ENCODE measurements at regions of chr2 and their contacts with region 1.

Region 1: GRCh38 chr2:136135921-136136906 is 18.3 kb upstream of the CXCR4 start:
- DNase-seq: peak; percentile 75
- H3K4me3 Mint-ChIP-seq: peak overlapping the region; percentile 11
- H3K27ac Mint-ChIP-seq: peak overlapping the region; percentile 70
- H3K4me1 Mint-ChIP-seq: peaks cover 89% of the 10 kb centered on the region
- H3K27me3 Mint-ChIP-seq: peaks cover 14% of the 10 kb centered on the region

Region 2: DNA sequence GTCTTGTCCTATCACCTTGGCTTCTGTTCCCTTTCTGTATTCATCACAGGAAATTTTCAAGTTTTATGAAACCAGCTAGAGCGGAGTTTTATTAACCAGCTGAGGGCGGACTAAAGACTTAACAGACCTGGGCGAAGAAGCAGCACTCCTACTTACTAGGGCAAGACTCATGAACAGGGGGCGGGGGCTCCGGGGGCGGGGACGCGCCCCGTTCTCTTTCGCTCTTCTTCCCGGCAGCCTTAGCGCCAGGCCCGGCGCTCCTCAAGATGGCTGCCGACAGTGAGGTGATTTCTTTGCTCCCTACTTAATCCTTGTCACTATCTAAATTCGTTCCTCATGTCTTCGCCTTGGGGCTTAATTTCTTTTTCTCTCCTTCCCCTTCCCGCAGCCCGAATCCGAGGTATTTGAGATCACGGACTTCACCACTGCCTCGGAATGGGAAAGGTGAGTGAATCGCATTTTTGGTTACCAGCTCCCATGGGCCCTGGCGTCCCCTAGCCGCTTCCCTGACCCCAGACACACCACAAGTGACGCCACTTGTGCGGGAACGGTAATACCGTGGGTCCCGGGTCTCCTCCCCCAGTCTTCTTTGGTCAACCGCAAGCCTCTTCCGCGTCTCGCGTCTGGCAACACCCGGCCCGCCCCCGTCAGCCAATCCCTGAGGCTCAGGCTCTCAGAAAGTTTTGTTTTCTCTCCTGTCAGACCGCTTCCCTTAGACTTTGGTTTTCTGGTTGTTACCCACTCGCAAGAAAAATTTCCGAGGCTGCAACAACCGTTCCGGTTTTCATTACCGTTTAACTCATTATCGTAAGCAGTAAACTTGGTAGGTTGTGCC is 1084.0 kb before region 1 on chr2 and contains the start of gene RAB3GAP1:
- CTCF ChIA-PET with region 1: no interaction called
- POLR2A ChIA-PET with region 1: no interaction called
- intact Hi-C with region 1: loop called (anchors 5 kb)
- DNase-seq: peak; percentile 97
- H3K4me3 Mint-ChIP-seq: peak within 1 kb of the TSS; percentile 98
- H3K27ac Mint-ChIP-seq: peak within 1 kb of the TSS; percentile 100
- H3K4me1 Mint-ChIP-seq: peaks cover 39% of the 10 kb centered on the region
- H3K27me3 Mint-ChIP-seq: no peaks in the 10 kb centered on the region
- total RNA-seq, gene RAB3GAP1: 29.6 to 30.7 TPM

Region 3: DNA sequence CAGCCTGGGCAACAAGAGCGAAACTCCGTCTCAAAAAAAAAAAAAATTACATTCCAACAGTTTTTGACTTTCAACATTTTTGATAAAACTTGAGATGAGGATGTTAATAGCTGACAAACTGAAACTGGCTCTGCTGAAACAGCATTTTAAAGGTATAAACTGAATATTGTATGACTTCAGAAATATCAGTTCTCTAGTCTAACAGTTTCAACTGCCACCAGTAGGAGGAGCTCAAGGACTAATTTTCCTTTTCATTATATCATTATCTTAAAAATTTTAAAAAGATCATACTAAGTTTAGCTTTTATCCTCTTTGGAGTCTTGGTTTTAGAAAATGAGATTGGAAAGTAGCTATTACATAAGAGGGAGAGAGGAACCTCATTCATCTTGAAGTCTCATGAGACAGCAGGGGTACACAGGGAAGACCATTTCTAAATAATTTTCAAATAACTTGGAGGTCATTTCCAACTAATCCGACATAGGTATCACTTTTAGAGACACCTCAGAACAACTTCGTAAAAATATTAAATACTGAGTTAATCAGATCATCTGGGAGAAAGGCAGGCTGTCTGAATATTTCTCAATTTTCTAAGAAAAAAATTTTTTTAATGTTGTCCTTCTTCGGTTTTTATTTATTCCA is 222.4 kb before region 1 on chr2:
- CTCF ChIA-PET with region 1: interaction called, 9 read pairs
- POLR2A ChIA-PET with region 1: no interaction called
- intact Hi-C with region 1: loop called (anchors 5 kb)
- DNase-seq: no peak
- H3K4me3 Mint-ChIP-seq: no peak overlapping the region
- H3K27ac Mint-ChIP-seq: no peak overlapping the region
- H3K4me1 Mint-ChIP-seq: peaks cover 14% of the 10 kb centered on the region
- H3K27me3 Mint-ChIP-seq: no peaks in the 10 kb centered on the region

Region 4: DNA sequence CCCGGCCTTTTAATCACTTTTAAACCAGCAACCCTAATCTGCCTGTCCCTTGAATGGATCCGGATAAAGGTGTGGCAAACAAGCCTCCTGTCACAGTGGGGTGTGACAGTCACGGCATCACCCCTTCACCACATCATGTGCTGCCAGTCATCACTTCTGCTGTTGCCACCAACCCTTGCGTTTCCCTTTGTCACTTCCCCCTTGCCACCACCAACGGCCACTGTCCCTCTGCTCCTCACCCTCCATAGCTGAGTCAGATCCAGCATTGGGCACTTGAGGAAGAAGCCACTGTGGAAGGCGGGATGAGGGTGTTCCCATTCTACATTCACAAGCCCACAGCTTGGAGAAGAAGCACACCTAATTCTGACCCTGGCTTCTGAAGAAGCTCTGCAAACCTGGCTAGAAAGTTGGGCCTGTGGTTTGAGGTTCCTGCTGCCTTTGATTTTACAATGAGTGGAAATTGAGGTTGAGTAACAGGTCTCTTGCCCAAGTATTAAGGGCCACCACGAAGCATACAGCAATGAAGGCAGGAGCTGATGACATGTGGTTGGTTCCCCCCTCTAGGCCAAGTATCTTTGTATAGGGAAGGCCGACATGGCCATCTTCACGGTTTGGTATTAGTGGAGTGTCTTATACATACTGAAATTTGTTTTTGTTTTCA is 127.9 kb before region 1 on chr2:
- CTCF ChIA-PET with region 1: no interaction called
- POLR2A ChIA-PET with region 1: interaction called, 3 read pairs
- intact Hi-C with region 1: loop called (anchors 1 kb)
- DNase-seq: peak; percentile 87
- H3K4me3 Mint-ChIP-seq: no peak overlapping the region
- H3K27ac Mint-ChIP-seq: peak overlapping the region; percentile 72
- H3K4me1 Mint-ChIP-seq: peaks cover 49% of the 10 kb centered on the region
- H3K27me3 Mint-ChIP-seq: no peaks in the 10 kb centered on the region

Region 5: DNA sequence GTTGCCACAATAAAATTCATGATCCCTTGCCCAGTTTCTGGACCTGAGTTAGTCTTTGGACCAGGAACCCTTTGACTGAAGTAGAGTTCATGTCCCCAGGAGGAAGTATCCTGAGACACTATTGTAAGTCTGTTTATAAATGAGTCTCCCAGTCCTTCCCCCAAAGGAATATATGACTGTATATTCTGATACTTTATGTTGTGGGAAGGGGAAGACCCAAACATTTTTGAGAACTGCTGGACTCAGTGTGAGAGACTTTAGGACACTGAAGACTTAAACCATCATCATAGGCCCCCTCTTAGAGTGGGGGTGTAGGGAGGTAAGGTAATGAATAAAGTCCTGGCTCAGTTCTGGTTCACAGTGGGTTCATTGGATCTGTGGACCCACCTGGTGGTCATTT is 10.3 kb after region 1 on chr2:
- CTCF ChIA-PET with region 1: interaction called, 4 read pairs
- POLR2A ChIA-PET with region 1: interaction called, 3 read pairs
- intact Hi-C with region 1: loop called (anchors 1 kb)
- DNase-seq: no peak
- H3K4me3 Mint-ChIP-seq: no peak overlapping the region
- H3K27ac Mint-ChIP-seq: no peak overlapping the region
- H3K4me1 Mint-ChIP-seq: peaks cover 23% of the 10 kb centered on the region
- H3K27me3 Mint-ChIP-seq: no peaks in the 10 kb centered on the region

Region 6: GRCh38 chr2:136310797-136311603 is 174.8 kb after region 1 on chr2:
- CTCF ChIA-PET with region 1: interaction called, 3 read pairs
- POLR2A ChIA-PET with region 1: interaction called, 11 read pairs
- intact Hi-C with region 1: loop called (anchors 1 kb)
- DNase-seq: peak; percentile 51
- H3K4me3 Mint-ChIP-seq: no peak overlapping the region
- H3K27ac Mint-ChIP-seq: peak overlapping the region; percentile 92
- H3K4me1 Mint-ChIP-seq: peaks cover 34% of the 10 kb centered on the region
- H3K27me3 Mint-ChIP-seq: no peaks in the 10 kb centered on the region

Measured in activated CD4-positive, alpha-beta memory T cell treated with anti-CD3 and anti-CD28 coated beads for 36 hours (primary cell).